Esophagus muscularis mucosa (tissue), 4 donors: ENCODE measurements at regions of chr11 and their contacts with region 1.

Region 1: GRCh38 chr11:95849087-95849825 is 59.0 kb downstream of the CEP57 start:
- DNase-seq: no peak
- H3K4me3 ChIP-seq: no peak overlapping the region
- H3K27ac ChIP-seq: peak overlapping the region; percentile 22 to 66 (median 34)
- H3K4me1 ChIP-seq: peaks cover 0 to 18% (median 9%) of the 10 kb centered on the region in 4 donors
- H3K27me3 ChIP-seq: no peaks in the 10 kb centered on the region
- CTCF ChIP-seq: peak; percentile 51 to 65 (median 58)
- EP300 ChIP-seq: no peak
- POLR2A ChIP-seq: no peak

Region 2: GRCh38 chr11:95912902-95913560 is 63.8 kb after region 1 on chr11:
- intact Hi-C with region 1: no loop called
- DNase-seq: no peak
- H3K4me3 ChIP-seq: no peak overlapping the region
- H3K27ac ChIP-seq: no peak overlapping the region
- H3K4me1 ChIP-seq: peaks cover 32 to 43% (median 37%) of the 10 kb centered on the region in 4 donors
- H3K27me3 ChIP-seq: no peaks in the 10 kb centered on the region
- CTCF ChIP-seq: no peak
- EP300 ChIP-seq: no peak
- POLR2A ChIP-seq: no peak

Region 3: GRCh38 chr11:95923728-95924413 is 74.6 kb after region 1 on chr11 and contains the start of gene MTMR2:
- intact Hi-C with region 1: loop called (anchors 10 kb)
- DNase-seq: peak; percentile 93
- H3K4me3 ChIP-seq: peak within 1 kb of the TSS; percentile 70 to 97 (median 85)
- H3K27ac ChIP-seq: peak within 1 kb of the TSS; percentile 95 to 97 (median 96)
- H3K4me1 ChIP-seq: peaks cover 12 to 42% (median 31%) of the 10 kb centered on the region in 4 donors
- H3K27me3 ChIP-seq: no peaks in the 10 kb centered on the region
- CTCF ChIP-seq: no peak
- EP300 ChIP-seq: no peak
- POLR2A ChIP-seq: peak; percentile 21
- total RNA-seq, gene MTMR2: 25.8 to 29.6 (median 27.9) TPM

Region 4: GRCh38 chr11:96012086-96012824 is 163.0 kb after region 1 on chr11:
- intact Hi-C with region 1: loop called (anchors 10 kb)
- DNase-seq: no peak
- H3K4me3 ChIP-seq: peak overlapping the region in 3 of 4 donors; percentile 13 to 23 (median 15)
- H3K27ac ChIP-seq: peak overlapping the region; percentile 62 to 66 (median 65)
- H3K4me1 ChIP-seq: peaks cover 9 to 41% (median 26%) of the 10 kb centered on the region in 4 donors
- H3K27me3 ChIP-seq: no peaks in the 10 kb centered on the region
- CTCF ChIP-seq: peak; percentile 58 to 72 (median 71)
- EP300 ChIP-seq: no peak
- POLR2A ChIP-seq: no peak